Right ventricle myocardium inferior (tissue), 1 donor: ENCODE measurements at regions of chr4 and their contacts with region 1.

Region 1: GRCh38 chr4:119286377-119287002 is 35.4 kb downstream of the FABP2 start:
- DNase-seq: no peak
- ATAC-seq: peak; percentile 48

Region 2: GRCh38 chr4:118740869-118741268 is 545.6 kb before region 1 on chr4:
- intact Hi-C with region 1: loop called (anchors 5 kb)
- DNase-seq: no peak
- ATAC-seq: no peak

Region 3: GRCh38 chr4:118981839-118982381 is 304.6 kb before region 1 on chr4:
- intact Hi-C with region 1: loop called (anchors 5 kb)
- DNase-seq: peak; percentile 48
- ATAC-seq: peak; percentile 78

Region 4: GRCh38 chr4:119165767-119166166 is 120.7 kb before region 1 on chr4:
- intact Hi-C with region 1: loop called (anchors 5 kb)
- DNase-seq: no peak
- ATAC-seq: no peak

Region 5: DNA sequence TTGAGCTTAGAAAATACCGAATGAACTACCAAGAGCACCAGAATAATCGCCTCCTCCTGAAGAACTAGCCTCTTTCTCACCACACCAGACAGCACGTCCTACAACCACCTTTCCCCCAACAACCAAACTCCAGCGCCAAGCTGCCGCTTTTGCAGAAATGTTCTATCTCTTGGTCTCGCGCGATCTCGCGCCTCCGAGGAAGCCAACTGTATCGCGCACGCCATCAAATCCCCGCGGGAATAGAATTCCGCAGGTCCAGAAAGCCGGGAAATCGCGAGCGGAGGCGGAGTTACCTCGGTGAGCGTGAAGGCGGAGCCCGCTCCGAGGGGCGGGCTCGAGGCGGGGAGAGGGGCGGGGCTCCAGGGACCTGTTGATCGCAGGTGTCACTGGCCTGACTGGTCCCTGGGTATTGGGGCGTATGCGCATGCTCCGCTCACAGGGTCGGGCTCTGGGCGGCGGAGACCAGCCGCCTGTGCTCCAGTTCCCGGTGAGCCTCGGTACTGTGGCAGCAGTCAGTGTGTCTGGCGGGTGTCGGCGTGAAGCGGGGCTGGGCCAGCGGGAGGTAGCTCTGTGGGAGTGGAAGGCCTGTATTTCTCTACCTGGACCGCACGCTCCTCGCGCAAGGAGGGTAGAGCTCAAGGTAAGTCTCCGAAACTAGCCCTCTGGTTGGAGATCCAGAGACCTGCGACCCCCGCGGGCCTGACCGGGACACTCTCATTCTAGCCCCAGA is 74.1 kb before region 1 on chr4 and contains the start of gene USP53:
- intact Hi-C with region 1: loop called (anchors 10 kb)
- DNase-seq: peak; percentile 97
- ATAC-seq: peak; percentile 97
- total RNA-seq, gene USP53: 32.8 TPM

Region 6: DNA sequence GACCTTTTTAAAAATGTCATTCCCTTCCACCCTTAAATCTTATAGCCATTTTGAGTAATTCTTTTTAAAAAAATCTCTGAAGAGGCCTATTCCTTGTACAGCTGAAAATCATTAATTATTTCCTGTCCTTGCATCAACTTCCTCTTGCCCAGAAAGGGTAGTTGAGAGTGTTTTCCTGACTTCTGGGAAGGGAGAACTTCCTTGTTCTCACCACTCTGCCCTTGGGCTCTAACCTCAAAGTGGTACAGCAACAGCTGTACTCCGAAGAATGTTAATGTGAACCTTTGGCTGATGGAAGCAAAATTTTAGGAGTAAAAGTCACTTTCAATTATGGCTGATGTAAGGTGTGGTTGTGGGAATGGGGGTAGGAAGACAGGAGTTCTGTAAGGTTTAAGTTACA is 50.5 kb after region 1 on chr4:
- intact Hi-C with region 1: no loop called
- DNase-seq: no peak
- ATAC-seq: peak; percentile 78